ENCODE measurements at regions of chr3 and their contacts with region 1.

Region 1: DNA sequence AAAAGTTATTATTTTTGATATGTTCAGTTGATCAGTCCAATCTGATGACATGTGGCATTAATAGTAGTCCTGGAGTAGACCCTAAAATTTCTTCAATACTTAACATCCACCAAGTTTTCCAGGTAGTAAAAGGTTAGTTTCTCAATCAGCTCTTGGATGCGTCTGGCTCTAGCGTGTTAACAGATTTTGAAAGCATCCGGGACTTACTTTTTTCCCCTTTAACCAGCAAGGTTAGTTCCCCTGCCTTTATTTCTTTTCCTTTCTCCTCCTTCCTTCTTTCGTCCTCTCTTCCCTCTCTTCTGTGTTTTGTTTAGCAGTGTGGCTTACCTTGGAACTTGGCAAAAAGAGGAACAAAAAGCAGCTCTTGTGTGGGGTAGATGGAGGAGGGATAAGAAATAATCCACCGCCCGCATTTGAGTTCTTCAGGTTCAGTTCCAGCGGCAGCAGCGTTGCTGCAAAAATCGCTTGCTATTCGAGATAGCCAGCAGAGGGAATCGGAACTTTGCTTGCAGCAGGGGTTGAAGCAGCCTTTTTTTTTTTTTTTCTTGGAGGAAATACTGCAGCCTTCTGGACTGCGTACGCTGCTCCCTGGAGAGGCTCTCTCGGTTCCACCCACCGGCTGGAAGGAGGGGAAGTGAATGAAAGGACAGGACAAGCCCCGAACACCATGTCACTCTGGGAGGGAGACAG is at the start of gene RBMS3:
- DNase-seq: peak; percentile 75 to 95
- H3K4me3 ChIP-seq: peak within 1 kb of the TSS; percentile 58 to 65
- H3K27ac ChIP-seq: peak within 1 kb of the TSS; percentile 90 to 91
- H3K4me1 ChIP-seq: peaks cover 0 to 10% of the 10 kb centered on the region in 2 donors
- H3K27me3 ChIP-seq: no peaks in the 10 kb centered on the region
- CTCF ChIP-seq: peak; percentile 30 to 61 (median 46)
- total RNA-seq, gene RBMS3: 65.8 TPM

Region 2: GRCh38 chr3:29065211-29065785 is 215.3 kb before region 1 on chr3:
- intact Hi-C with region 1: loop called (anchors 2 kb)
- DNase-seq: peak; percentile 62 to 97
- H3K4me3 ChIP-seq: no peak overlapping the region
- H3K27ac ChIP-seq: peak overlapping the region; percentile 55 to 66
- H3K4me1 ChIP-seq: peaks cover 0 to 10% of the 10 kb centered on the region in 2 donors
- H3K27me3 ChIP-seq: no peaks in the 10 kb centered on the region
- CTCF ChIP-seq: no peak

Region 3: GRCh38 chr3:29384640-29385039 is 104.1 kb after region 1 on chr3:
- intact Hi-C with region 1: loop called (anchors 5 kb)
- DNase-seq: peak in 1 of 2 donors; percentile 67
- H3K4me3 ChIP-seq: peak overlapping the region in 1 of 2 donors; percentile 9
- H3K27ac ChIP-seq: peak overlapping the region; percentile 77 to 84
- H3K4me1 ChIP-seq: peaks cover 2 to 37% of the 10 kb centered on the region in 2 donors
- H3K27me3 ChIP-seq: no peaks in the 10 kb centered on the region
- CTCF ChIP-seq: no peak

Region 4: GRCh38 chr3:29525254-29525881 is 244.8 kb after region 1 on chr3:
- intact Hi-C with region 1: loop called (anchors 2 kb)
- DNase-seq: peak in 1 of 2 donors; percentile 89
- H3K4me3 ChIP-seq: peak overlapping the region; percentile 18 to 33
- H3K27ac ChIP-seq: peak overlapping the region; percentile 75 to 80
- H3K4me1 ChIP-seq: peaks cover 5 to 34% of the 10 kb centered on the region in 2 donors
- H3K27me3 ChIP-seq: no peaks in the 10 kb centered on the region
- CTCF ChIP-seq: no peak

Region 5: DNA sequence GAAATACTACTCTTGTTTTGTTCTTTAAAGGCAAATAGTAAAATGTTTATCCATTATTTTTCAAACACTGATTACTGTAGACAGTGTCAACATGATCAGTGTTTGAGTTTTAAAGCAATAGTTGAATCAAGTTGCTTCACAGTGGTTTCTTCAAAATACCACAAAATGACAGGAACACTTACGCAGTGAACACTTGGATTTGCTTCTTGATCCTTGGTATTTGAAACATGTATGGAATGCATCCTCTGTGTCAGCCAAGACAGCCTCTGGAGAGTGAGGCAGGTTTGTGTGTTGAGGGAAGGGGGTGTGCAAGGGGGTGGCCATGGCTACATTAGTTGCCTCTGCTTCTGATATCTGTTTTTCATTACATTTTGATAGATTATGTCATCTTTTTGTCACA is 413.3 kb after region 1 on chr3:
- intact Hi-C with region 1: loop called (anchors 5 kb)
- DNase-seq: no peak
- H3K4me3 ChIP-seq: no peak overlapping the region
- H3K27ac ChIP-seq: peak overlapping the region; percentile 2 to 41
- H3K4me1 ChIP-seq: peaks cover 3 to 30% of the 10 kb centered on the region in 2 donors
- H3K27me3 ChIP-seq: no peaks in the 10 kb centered on the region
- CTCF ChIP-seq: no peak

Region 6: GRCh38 chr3:29922992-29923746 is 642.6 kb after region 1 on chr3:
- intact Hi-C with region 1: loop called (anchors 10 kb)
- DNase-seq: no peak
- H3K4me3 ChIP-seq: no peak overlapping the region
- H3K27ac ChIP-seq: peak overlapping the region in 1 of 2 donors; percentile 22
- H3K4me1 ChIP-seq: peaks cover 0 to 2% of the 10 kb centered on the region in 2 donors
- H3K27me3 ChIP-seq: no peaks in the 10 kb centered on the region
- CTCF ChIP-seq: no peak

Region 7: GRCh38 chr3:30324587-30324986 is 1044.0 kb after region 1 on chr3:
- intact Hi-C with region 1: no loop called
- DNase-seq: no peak
- H3K4me3 ChIP-seq: no peak overlapping the region
- H3K27ac ChIP-seq: peak overlapping the region in 1 of 2 donors; percentile 45
- H3K4me1 ChIP-seq: peaks cover 0 to 6% of the 10 kb centered on the region in 2 donors
- H3K27me3 ChIP-seq: no peaks in the 10 kb centered on the region
- CTCF ChIP-seq: no peak

Measured in ascending aorta (tissue), 2 donors.